A549 (cell line): ENCODE measurements at regions of chr15 and their contacts with region 1.

Region 1: DNA sequence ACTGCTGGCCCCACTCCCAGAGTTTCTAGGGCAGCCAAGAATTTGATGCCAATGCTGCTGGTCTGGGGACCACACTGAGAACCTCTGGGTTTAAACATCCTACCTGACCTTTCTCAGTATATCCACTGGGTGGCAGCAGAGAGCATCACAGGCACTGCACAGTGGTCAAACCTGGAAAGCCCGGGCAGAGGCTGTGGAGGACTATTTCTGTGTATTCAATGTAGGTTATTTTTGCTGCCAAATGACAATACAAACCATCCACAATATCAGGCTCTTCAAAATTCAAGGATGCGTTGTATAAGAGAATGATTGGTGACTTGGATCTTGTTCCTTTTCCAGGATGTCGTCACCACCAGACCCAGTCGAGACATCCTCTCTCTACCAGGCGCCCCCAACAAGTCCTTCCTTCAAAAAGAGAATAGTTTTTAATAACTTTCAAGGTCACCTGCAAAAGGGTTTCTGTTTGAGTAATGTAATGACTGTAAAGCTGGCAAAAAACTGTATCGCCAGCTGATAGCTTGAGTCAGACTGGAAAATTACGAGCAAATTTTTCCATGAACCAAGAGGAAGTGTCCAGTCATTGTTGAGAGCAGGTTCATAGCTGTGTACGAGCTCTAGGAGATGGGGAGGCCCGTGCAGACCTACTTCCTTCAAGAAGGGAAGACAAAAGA is 30.5 kb upstream of the MYZAP start:
- DNase-seq: peak; percentile 72 to 77
- ATAC-seq: peak; percentile 94 to 98
- H3K4me3 ChIP-seq: no peak overlapping the region
- H3K27ac ChIP-seq: peak overlapping the region in 1 of 2 experiments; percentile 8; a peak in 2 of 6 replicates
- H3K4me1 ChIP-seq: peaks cover 19% of the 10 kb centered on the region
- CTCF ChIP-seq: peak; percentile 96
- EP300 ChIP-seq: no peak
- POLR2A ChIP-seq: no peak
- RAD21 ChIP-seq: peak; percentile 87

Region 2: GRCh38 chr15:57440799-57441198 is 120.4 kb before region 1 on chr15:
- CTCF ChIA-PET with region 1: no interaction called
- POLR2A ChIA-PET with region 1: no interaction called
- DNase-seq: no peak
- ATAC-seq: no peak
- H3K4me3 ChIP-seq: no peak overlapping the region
- H3K27ac ChIP-seq: no peak overlapping the region
- H3K4me1 ChIP-seq: peaks cover 8% of the 10 kb centered on the region
- CTCF ChIP-seq: no peak
- EP300 ChIP-seq: no peak
- POLR2A ChIP-seq: no peak
- RAD21 ChIP-seq: no peak

Region 3: DNA sequence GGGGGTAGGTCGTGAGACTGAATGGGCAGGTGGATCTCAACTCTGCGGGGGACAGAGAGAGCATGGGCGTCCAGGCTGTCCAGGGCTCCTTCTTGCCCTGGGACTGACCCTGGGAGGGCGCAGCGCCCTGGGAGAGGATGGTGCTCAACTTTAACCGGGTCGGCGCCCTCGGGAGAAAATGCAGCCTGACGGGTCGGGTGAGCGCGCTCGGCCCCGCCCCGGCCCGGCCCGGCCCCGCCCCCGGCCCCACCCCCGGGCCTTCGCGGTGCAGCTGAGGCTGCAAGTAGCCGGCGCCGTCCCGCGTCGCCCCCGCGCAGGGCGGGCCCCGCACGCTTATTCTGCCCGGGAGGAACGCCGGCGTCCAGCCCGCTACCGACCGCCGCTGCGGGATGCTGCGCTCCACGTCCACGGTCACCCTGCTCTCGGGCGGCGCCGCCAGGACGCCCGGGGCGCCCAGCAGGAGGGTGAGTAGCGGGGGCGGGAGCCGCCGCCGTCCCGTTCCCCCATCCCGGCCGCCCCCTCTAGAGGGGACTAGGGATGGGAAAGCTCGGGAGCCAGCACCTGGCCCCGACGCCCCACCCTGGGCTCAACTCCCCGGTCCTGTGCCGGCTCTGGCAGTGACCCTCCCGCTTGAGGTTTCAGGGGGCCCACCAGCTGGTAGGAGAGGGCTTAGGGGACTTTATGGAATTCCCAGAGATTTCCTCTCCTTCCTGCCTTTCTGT is 30.6 kb after region 1 on chr15 and contains the start of gene MYZAP:
- CTCF ChIA-PET with region 1: interaction called, 22 read pairs
- POLR2A ChIA-PET with region 1: no interaction called
- DNase-seq: peak in 1 of 2 experiments; percentile 84
- ATAC-seq: peak; percentile 82 to 94
- H3K4me3 ChIP-seq: peak within 1 kb of the TSS; percentile 66
- H3K27ac ChIP-seq: peak within 1 kb of the TSS; percentile 54 to 86
- H3K4me1 ChIP-seq: peaks cover 4% of the 10 kb centered on the region; the same call in 1 of the 3 replicates
- CTCF ChIP-seq: no peak
- EP300 ChIP-seq: no peak
- POLR2A ChIP-seq: no peak
- RAD21 ChIP-seq: no peak
- polyA plus RNA-seq, gene MYZAP: 1.1 and 1.2 TPM in 2 replicates

Region 4: DNA sequence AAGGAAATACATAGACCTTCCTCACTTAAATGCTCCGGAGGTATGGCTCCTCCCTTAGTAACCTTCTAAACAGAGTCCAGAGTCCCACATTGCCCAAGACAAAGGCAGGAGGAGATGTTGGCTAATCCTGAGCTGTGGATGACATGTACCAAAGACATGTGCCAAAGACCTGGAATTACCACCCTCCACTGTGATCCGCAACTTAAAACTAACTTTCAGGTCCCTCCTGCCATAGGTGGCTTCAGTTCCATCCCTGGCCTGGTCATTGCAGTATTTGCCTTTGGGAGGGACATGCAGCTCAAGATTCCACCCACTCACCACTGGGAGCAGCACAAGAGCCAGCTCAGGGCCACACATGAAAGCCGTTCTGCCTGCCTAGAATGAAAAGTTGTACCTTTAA is 58.6 kb after region 1 on chr15:
- CTCF ChIA-PET with region 1: interaction called, 286 read pairs
- POLR2A ChIA-PET with region 1: no interaction called
- DNase-seq: peak in 1 of 2 experiments; percentile 21
- ATAC-seq: peak; percentile 73 to 82
- H3K4me3 ChIP-seq: no peak overlapping the region
- H3K27ac ChIP-seq: no peak overlapping the region
- H3K4me1 ChIP-seq: no peaks in the 10 kb centered on the region
- CTCF ChIP-seq: no peak
- EP300 ChIP-seq: no peak
- POLR2A ChIP-seq: no peak
- RAD21 ChIP-seq: no peak

Region 5: GRCh38 chr15:57640935-57641682 is 79.9 kb after region 1 on chr15:
- CTCF ChIA-PET with region 1: interaction called, 32 read pairs
- POLR2A ChIA-PET with region 1: no interaction called
- DNase-seq: peak; percentile 40 to 63
- ATAC-seq: peak; percentile 87 to 92
- H3K4me3 ChIP-seq: no peak overlapping the region
- H3K27ac ChIP-seq: no peak overlapping the region
- H3K4me1 ChIP-seq: no peaks in the 10 kb centered on the region
- CTCF ChIP-seq: peak; percentile 38; the same call in 2 of the 3 replicates
- EP300 ChIP-seq: no peak
- POLR2A ChIP-seq: no peak
- RAD21 ChIP-seq: peak; percentile 43 to 50; a peak in 3 of 5 replicates

Region 6: DNA sequence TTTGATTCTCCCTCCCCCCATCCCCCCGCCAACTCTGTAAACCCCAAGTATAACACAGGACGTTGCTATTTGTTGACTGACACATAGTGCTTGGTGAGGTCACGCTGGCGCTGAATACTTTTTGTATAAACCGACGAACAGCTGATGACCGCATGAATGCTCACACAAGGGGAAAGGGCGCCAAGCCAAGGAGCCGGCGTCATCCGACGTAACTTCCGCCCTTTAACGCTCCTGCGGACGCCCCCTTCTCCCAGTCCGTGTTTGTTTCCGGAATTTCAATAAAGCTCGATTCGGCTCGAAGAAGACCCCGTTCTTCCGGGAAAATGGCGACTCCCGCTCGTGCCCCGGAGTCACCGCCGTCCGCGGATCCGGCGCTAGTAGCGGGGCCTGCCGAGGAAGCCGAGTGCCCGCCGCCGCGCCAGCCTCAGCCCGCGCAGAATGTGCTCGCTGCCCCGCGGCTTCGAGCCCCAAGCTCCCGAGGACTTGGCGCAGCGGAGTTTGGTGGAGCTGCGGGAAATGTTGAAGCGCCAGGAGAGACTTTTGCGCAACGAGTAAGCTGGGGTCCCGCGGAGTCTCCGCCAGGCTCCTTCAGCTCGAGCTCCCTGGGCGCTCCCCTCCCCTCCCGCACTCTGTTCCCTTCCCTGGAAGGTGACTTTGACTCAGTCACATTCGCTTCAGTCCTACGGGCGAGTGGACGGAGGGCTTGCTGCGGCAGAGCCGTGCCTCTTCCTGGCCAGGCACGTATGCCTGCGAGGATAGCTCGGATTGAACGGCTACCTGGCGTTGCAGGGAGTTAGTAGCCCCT is 145.4 kb after region 1 on chr15 and contains the start of gene POLR2M:
- CTCF ChIA-PET with region 1: interaction called, 21 read pairs
- POLR2A ChIA-PET with region 1: no interaction called
- DNase-seq: peak; percentile 92 to 97
- ATAC-seq: peak; percentile 94 to 96
- H3K4me3 ChIP-seq: peak within 1 kb of the TSS; percentile 80
- H3K27ac ChIP-seq: peak within 1 kb of the TSS; percentile 98
- H3K4me1 ChIP-seq: peaks cover 11% of the 10 kb centered on the region; the same call in 2 of the 3 replicates
- CTCF ChIP-seq: no peak
- EP300 ChIP-seq: no peak
- POLR2A ChIP-seq: peak; percentile 70
- RAD21 ChIP-seq: 0 out of 5 replicates have a peak, but pooled peaks of 1 of the 2 experiments have one; percentile 2
- polyA plus RNA-seq, gene POLR2M: 99.6 and 107 TPM in 2 replicates

Region 7: GRCh38 chr15:58182460-58183163 is 621.4 kb after region 1 on chr15:
- CTCF ChIA-PET with region 1: interaction called, 10 read pairs
- POLR2A ChIA-PET with region 1: no interaction called
- DNase-seq: peak; percentile 65 to 75
- ATAC-seq: peak; percentile 95 to 100
- H3K4me3 ChIP-seq: no peak overlapping the region
- H3K27ac ChIP-seq: no peak overlapping the region
- H3K4me1 ChIP-seq: no peaks in the 10 kb centered on the region
- CTCF ChIP-seq: peak; percentile 96
- EP300 ChIP-seq: no peak
- POLR2A ChIP-seq: no peak
- RAD21 ChIP-seq: peak; percentile 95 to 97